ENCODE measurements at regions of chr9 and their contacts with region 1.

Region 1: DNA sequence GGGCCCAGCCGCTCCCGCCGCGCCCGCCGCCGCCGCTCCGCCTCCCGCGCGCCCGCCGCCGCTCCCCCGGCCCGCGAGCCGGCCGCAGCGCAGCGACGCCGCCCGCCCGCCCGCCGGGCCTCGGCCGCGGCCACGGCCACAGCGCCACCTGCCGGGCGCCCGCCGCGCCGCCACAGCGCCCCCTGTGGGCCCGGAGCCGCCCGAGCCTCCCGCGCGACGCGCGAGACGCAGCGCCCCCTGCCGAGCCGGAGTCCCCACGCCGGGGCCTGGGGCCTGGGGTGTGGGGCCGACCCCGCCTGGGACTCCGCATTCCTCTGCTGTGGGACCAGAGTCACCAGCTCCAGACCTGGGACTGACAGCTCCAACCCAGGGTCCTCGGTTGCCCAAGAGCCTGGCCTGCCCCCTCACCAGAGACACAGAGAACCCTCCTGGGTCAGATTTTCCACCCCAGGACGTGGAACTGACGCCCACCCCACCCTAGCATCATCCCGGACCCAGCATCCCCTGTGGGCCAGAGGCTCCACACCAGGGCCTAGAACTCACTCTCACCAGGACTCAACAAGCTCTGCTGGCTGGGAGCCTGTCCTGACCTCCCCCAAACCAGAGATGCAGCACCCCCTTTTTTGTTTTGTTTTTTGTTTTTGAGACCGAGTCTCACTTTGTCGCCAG is at the start of gene RAPGEF1:
- DNase-seq: no peak
- ATAC-seq: peak; percentile 50
- H3K4me3 ChIP-seq: peak within 1 kb of the TSS; percentile 71
- H3K27ac ChIP-seq: peak within 1 kb of the TSS; percentile 93
- H3K4me1 ChIP-seq: peaks cover 42% of the 10 kb centered on the region
- H3K27me3 ChIP-seq: no peaks in the 10 kb centered on the region
- CTCF ChIP-seq: peak; percentile 74 to 96 (median 76)
- EP300 ChIP-seq: no peak
- POLR2A ChIP-seq: no peak
- RAD21 ChIP-seq: peak; percentile 91
- polyA plus RNA-seq, gene RAPGEF1: 0.42 to 0.60 TPM

Region 2: DNA sequence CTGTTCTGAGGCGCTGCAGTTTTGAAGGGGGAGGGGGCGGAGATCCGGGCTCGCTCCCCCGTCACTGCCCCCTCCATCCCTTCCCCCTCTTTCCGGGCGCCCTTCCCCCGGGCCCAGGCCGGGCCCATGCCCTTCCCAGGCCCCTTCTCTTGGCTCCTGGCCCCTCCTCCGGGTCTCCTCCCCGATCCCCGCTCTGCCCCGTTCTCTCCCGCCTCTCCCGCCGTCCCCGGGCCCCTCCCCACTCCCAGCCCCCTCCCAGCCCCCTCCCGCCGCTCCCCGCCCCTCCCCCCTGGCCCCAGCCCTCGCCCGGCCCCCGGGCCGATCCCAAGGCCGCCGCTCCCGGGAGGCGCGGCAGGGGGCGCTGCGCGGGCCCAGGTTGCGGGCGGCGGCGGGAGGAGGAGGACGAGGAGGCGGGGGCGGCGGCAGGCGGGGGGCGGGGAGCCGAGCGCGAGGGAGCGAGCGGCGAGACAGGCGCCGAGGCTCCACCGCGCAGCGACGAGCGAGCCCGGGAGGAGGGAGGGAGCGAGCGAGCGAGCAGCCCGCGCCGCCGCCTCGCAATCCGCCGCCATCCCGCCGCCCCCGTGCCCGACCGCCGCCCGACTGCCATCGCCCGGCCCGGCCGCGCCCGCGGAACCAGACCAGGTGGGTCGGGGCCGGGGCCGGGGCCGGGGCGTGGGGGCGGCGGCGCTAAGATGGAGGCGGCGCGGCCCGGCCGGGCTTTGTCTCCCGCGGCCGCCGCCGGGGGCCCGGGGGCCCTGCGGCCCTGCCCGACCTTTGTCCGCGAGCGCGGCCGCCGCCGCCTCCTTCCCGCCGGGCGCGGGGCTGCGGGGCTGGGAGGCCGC is 346.3 kb before region 1 on chr9 and contains the start of gene PRRC2B:
- CTCF ChIA-PET with region 1: no interaction called
- POLR2A ChIA-PET with region 1: no interaction called
- RAD21 ChIA-PET with region 1: no interaction called
- SMC1A ChIA-PET with region 1: interaction called, 3 read pairs
- in situ Hi-C with region 1: no loop called
- intact Hi-C with region 1: loop called (anchors 10 kb)
- DNase-seq: no peak
- ATAC-seq: peak; percentile 57
- H3K4me3 ChIP-seq: peak within 1 kb of the TSS; percentile 79
- H3K27ac ChIP-seq: peak within 1 kb of the TSS; percentile 87
- H3K4me1 ChIP-seq: peaks cover 25% of the 10 kb centered on the region
- H3K27me3 ChIP-seq: no peaks in the 10 kb centered on the region
- CTCF ChIP-seq: peak in 2 of 3 experiments; percentile 51 to 57; a peak in 4 of 6 replicates
- EP300 ChIP-seq: no peak
- POLR2A ChIP-seq: peak; percentile 92
- RAD21 ChIP-seq: peak; percentile 66
- polyA plus RNA-seq, gene PRRC2B: 0.84 to 2.0 TPM

Region 3: DNA sequence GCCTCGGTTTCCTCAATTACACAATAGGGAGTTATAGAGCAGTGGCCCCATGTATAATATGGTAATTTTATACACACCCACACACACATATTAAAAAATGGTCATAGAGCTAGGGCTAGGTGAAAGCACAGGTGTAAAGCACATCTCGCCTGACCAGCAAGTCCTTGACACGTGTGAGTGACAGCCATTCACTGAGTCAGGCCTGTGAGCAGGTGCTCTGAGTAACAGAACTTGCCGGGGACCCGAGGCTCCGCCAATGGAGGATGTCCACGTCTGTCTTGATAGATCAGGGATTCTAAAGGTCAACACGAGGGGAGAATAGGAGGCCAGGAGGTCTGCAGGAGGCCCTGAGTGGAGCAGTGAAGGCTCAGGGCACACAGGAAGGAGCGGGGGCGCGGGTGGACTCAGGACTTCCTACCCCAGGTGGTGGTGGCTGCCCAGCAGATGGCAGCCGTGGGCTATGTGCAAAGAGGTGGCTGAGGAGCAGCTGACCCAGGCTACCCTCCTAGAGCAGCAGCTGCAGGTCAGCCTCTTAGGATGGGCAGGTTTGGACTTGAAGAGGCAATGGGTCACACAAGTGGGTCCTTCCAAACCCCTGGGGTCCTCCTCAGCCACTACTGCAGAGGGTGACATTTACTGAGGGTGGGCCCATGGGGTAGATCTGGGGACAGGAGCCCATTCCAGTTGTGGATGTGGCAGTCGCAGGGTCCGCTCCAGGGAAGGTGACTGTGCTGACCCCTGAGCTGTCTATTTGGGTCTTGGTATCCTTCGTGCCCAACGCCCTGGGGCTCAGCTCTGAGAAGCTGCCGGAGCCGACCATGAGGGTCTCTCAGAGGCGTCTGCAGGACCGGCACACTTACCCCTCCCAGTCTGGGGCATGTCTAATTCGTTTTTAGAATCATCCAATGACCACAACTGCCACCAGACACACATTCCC is 148.9 kb before region 1 on chr9:
- CTCF ChIA-PET with region 1: interaction called, 55 read pairs
- POLR2A ChIA-PET with region 1: interaction called, 3 read pairs
- RAD21 ChIA-PET with region 1: interaction called, 8 read pairs
- SMC1A ChIA-PET with region 1: interaction called, 22 read pairs
- in situ Hi-C with region 1: loop called (anchors 5 kb)
- intact Hi-C with region 1: loop called (anchors 2 kb)
- DNase-seq: peak; percentile 21
- ATAC-seq: peak; percentile 98
- H3K4me3 ChIP-seq: no peak overlapping the region
- H3K27ac ChIP-seq: no peak overlapping the region
- H3K4me1 ChIP-seq: no peaks in the 10 kb centered on the region
- H3K27me3 ChIP-seq: no peaks in the 10 kb centered on the region
- CTCF ChIP-seq: peak; percentile 73 to 97 (median 86)
- EP300 ChIP-seq: no peak
- POLR2A ChIP-seq: 0 out of 2 replicates have a peak, but pooled peaks have one; percentile 53
- RAD21 ChIP-seq: peak; percentile 78

Region 4: DNA sequence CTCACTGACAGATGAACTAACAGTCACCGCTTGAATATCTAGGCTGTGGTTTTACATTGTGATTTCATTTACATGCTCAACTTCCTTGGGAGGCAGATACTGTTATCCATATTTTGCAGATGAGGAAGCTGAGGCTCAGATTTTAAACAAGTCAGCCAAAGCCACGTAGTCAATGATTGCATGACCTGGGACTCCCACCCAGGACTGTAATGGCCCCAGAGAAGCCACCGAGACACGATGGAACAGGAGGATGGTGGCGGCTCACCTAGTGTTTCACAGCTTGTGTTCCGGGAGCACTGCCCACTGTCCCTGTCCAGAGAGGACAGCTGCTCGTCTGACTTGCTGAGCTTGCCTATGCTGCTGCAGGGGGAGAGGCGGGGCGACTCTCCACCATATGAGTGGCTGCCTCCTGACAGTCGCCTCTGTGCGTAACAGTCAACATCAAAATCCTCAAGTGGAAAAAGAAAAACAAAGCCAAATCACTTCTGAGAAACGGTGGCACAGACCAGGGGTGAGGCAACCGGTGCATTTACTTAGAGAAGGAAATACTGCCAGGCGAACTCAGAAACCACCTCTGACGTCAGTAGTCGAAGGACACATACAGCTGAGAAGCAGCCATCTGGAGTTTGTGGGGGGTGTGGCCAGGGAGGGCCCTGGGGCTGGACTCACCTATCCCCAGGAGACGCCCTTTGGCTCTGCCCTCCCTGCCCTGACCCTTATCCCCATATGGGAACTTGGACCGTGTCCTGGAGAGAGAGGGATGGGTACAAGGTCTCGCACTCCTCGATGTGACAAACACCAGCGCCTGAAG is 112.3 kb before region 1 on chr9:
- CTCF ChIA-PET with region 1: interaction called, 12 read pairs
- POLR2A ChIA-PET with region 1: interaction called, 18 read pairs
- RAD21 ChIA-PET with region 1: interaction called, 34 read pairs
- SMC1A ChIA-PET with region 1: interaction called, 58 read pairs
- in situ Hi-C with region 1: no loop called
- intact Hi-C with region 1: loop called (anchors 5 kb)
- DNase-seq: no peak
- ATAC-seq: peak; percentile 48
- H3K4me3 ChIP-seq: no peak overlapping the region
- H3K27ac ChIP-seq: peak overlapping the region; percentile 88
- H3K4me1 ChIP-seq: peaks cover 44% of the 10 kb centered on the region
- H3K27me3 ChIP-seq: no peaks in the 10 kb centered on the region
- CTCF ChIP-seq: no peak
- EP300 ChIP-seq: no peak
- POLR2A ChIP-seq: 0 out of 2 replicates have a peak, but pooled peaks have one; percentile 22
- RAD21 ChIP-seq: no peak

Region 5: DNA sequence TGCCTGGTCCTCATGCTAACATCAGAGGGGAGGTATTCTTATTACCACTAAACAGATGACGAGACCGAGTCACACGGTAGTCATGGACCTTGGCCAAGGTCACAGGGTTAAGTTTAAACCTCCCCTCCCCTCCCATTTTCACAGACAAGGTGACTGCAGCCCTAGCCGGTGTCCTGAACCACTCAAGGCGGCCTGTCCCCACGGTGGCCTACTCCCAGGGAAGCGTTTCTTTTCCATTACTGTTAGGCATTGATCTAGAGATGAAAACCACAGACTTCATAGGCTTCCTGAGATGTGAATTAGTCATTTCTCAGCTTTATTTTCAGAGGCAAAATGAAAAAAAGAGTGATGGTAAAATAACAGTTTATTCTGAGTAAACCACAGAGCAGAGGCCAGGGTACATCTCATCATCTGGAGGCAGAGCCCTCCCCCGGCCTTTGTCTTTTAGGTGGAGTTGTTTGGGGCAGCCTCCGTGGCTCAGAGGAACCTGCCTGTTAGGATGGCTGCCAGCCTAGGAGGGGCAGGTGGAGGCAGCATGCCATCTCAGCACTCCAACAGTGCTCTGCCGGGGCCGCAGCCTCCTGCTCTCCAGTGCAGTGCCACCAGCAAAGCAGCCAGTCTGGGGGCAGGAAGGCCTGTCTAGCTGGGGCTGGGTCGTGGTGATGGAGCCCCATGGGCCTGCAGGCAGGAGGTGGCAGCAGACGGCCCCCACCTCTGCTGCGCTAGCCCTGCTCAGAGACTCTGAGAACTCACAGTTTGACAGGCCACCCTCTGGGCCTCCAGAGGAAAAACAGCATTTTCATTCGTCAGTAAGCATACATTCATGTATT is 71.5 kb before region 1 on chr9:
- CTCF ChIA-PET with region 1: interaction called, 197 read pairs
- POLR2A ChIA-PET with region 1: interaction called, 271 read pairs
- RAD21 ChIA-PET with region 1: interaction called, 408 read pairs
- SMC1A ChIA-PET with region 1: interaction called, 535 read pairs
- in situ Hi-C with region 1: no loop called
- intact Hi-C with region 1: no loop called
- DNase-seq: peak; percentile 62
- ATAC-seq: peak; percentile 74
- H3K4me3 ChIP-seq: peak overlapping the region; percentile 54
- H3K27ac ChIP-seq: peak overlapping the region; percentile 88
- H3K4me1 ChIP-seq: peaks cover 72% of the 10 kb centered on the region
- H3K27me3 ChIP-seq: no peaks in the 10 kb centered on the region
- CTCF ChIP-seq: peak; percentile 3 to 5 (median 4); a peak in 1 of 6 replicates
- EP300 ChIP-seq: peak; percentile 25 to 47; a peak in 2 of 4 replicates
- POLR2A ChIP-seq: peak; percentile 11; the same call in 1 of the 2 replicates
- RAD21 ChIP-seq: no peak; the same call in 1 of the 2 replicates

Region 6: GRCh38 chr9:131704141-131704983 is 35.8 kb before region 1 on chr9:
- CTCF ChIA-PET with region 1: interaction called, 8 read pairs
- POLR2A ChIA-PET with region 1: interaction called, 291 read pairs
- RAD21 ChIA-PET with region 1: interaction called, 362 read pairs
- SMC1A ChIA-PET with region 1: interaction called, 416 read pairs
- in situ Hi-C with region 1: no loop called
- intact Hi-C with region 1: loop called (anchors 5 kb)
- DNase-seq: no peak
- ATAC-seq: peak; percentile 12; the same call in 1 of the 3 replicates
- H3K4me3 ChIP-seq: no peak overlapping the region
- H3K27ac ChIP-seq: peak overlapping the region; percentile 83
- H3K4me1 ChIP-seq: peaks cover 63% of the 10 kb centered on the region
- H3K27me3 ChIP-seq: no peaks in the 10 kb centered on the region
- CTCF ChIP-seq: no peak
- EP300 ChIP-seq: no peak
- POLR2A ChIP-seq: no peak
- RAD21 ChIP-seq: no peak

Region 7: DNA sequence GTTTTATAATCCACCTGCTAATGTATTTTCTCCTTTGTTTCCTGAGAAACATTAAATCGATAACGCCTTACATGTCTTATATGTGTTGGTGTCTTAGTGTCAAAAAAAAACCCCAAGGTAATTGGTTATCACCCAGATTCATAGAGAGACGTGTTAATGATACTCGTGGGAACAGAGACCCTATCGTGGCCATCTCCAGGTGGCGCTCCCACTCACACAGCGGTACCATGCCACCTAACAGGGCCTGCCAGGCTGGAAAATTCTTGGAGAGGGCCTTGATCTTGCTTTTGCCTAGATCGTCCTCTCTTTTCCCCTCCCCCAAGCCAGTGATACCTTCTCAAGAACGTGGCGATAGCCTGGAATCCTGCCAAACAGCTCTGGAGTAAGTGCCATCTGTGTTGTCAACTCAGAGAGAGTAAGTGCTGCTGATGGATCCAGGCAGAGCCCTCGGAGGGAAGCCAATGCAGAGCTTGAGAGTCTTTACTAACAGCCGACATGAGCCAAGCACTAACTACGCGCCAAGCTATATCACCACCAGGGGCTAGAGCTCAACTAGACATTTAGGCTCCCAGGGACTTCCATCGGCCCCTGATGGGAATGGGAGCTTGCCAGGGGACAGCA is 18.0 kb before region 1 on chr9:
- CTCF ChIA-PET with region 1: interaction called, 42 read pairs
- POLR2A ChIA-PET with region 1: interaction called, 291 read pairs
- RAD21 ChIA-PET with region 1: interaction called, 56 read pairs
- SMC1A ChIA-PET with region 1: interaction called, 79 read pairs
- in situ Hi-C with region 1: no loop called
- intact Hi-C with region 1: loop called (anchors 2 kb)
- DNase-seq: no peak
- ATAC-seq: no peak
- H3K4me3 ChIP-seq: no peak overlapping the region
- H3K27ac ChIP-seq: no peak overlapping the region
- H3K4me1 ChIP-seq: peaks cover 66% of the 10 kb centered on the region
- H3K27me3 ChIP-seq: no peaks in the 10 kb centered on the region
- CTCF ChIP-seq: no peak
- EP300 ChIP-seq: no peak
- POLR2A ChIP-seq: no peak
- RAD21 ChIP-seq: no peak

Region 8: GRCh38 chr9:131885144-131885609 is 145.1 kb after region 1 on chr9:
- CTCF ChIA-PET with region 1: no interaction called
- POLR2A ChIA-PET with region 1: no interaction called
- RAD21 ChIA-PET with region 1: no interaction called
- SMC1A ChIA-PET with region 1: no interaction called
- in situ Hi-C with region 1: no loop called
- intact Hi-C with region 1: no loop called
- DNase-seq: no peak
- ATAC-seq: no peak
- H3K4me3 ChIP-seq: no peak overlapping the region
- H3K27ac ChIP-seq: no peak overlapping the region
- H3K4me1 ChIP-seq: no peaks in the 10 kb centered on the region
- H3K27me3 ChIP-seq: no peaks in the 10 kb centered on the region
- CTCF ChIP-seq: no peak
- EP300 ChIP-seq: no peak
- POLR2A ChIP-seq: no peak
- RAD21 ChIP-seq: no peak

Region 9: GRCh38 chr9:132498531-132499210 is 758.6 kb after region 1 on chr9:
- CTCF ChIA-PET with region 1: no interaction called
- POLR2A ChIA-PET with region 1: no interaction called
- RAD21 ChIA-PET with region 1: no interaction called
- SMC1A ChIA-PET with region 1: no interaction called
- in situ Hi-C with region 1: no loop called
- intact Hi-C with region 1: no loop called
- DNase-seq: no peak
- ATAC-seq: no peak
- H3K4me3 ChIP-seq: no peak overlapping the region
- H3K27ac ChIP-seq: no peak overlapping the region
- H3K4me1 ChIP-seq: no peaks in the 10 kb centered on the region
- H3K27me3 ChIP-seq: no peaks in the 10 kb centered on the region; a peak in 2 of 4 replicates
- CTCF ChIP-seq: no peak
- EP300 ChIP-seq: no peak
- POLR2A ChIP-seq: no peak
- RAD21 ChIP-seq: no peak